ENCODE measurements at regions of chr9 and their contacts with region 1.

Region 1: DNA sequence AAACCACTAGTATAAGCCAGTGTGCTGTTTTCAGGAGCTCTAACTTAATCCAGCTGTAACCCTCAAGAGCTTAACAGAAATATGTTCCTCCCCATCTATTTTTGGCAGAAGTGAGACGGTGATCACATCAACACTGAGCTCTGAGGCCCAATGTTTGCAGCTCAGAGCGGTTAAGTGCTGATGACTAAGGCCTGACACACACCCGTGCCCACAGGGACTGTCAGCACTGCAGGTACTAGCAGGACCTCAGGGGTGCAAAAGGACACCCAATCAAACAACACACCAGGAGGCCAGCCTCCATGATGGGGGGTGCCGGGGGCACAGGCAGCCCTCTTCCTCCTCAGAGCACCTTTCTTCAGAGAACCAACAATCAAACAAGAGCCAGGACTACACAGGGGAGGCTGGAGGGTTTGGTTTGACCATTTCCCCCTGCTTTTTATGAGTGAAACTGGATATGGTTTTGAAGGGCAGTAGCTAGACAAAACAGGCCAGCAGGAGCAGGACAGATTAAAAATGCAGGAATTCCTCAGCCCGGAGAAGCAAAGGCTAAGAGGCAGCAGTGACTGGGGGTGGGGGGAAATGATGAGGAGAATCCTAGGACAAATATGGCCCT is 61.3 kb downstream of the RAPGEF1 start:
- DNase-seq: peak; percentile 89 to 90
- ATAC-seq: peak; percentile 90
- H3K4me3 ChIP-seq: no peak overlapping the region
- H3K27ac ChIP-seq: peak overlapping the region; percentile 86 to 98
- H3K4me1 ChIP-seq: peaks cover 1 to 12% of the 10 kb centered on the region in 2 donors
- H3K27me3 ChIP-seq: no peaks in the 10 kb centered on the region

Region 2: DNA sequence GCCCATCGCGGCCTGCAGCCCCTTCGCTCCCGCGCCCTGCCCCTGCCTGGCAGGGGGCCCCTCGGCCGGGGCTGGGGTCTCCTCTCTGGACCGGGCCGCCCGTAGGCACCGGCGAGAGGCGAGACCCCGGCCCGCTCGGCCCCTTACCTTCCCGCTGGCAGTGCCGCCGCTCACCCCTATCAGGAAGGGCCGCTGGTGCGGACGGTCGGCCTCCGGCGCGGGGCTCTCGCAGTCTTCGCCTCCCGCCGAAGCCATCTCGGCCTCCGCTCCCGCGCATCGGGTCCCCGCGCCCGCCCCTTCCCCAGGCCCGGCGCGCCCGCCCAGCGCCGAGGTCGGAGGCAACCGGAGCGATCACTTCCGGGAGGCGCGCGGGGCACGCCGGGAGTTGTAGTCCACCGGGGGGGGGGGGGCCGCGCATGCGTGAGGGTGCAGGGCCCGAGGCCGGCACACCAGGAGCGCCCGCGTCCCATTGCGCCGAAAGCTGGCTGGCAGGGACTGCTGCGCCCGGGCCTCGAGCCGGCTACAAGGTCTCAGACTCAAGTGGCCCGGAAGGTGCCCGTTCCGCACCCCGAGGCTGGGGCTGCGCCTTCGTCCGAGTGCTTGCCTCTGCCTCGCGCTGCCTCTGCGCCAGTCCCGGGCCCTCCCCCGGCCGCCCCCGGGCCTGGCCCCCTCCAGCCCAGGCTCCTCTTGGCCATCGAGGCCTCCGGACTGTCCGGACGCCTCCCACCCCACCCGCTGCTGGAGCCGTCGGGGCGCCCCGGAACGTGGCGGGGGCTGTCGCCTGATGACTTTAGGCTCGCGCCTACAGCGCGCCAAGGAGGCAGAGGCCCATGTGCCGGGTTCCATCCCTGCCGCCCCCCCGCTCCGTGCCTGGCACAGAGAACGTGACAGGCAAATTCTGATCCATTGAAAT is 147.4 kb before region 1 on chr9 and contains the start of gene UCK1:
- intact Hi-C with region 1: no loop called
- DNase-seq: peak; percentile 88 to 92
- ATAC-seq: peak; percentile 96
- H3K4me3 ChIP-seq: peak within 1 kb of the TSS; percentile 80 to 98
- H3K27ac ChIP-seq: peak within 1 kb of the TSS in 1 of 2 donors; percentile 30
- H3K4me1 ChIP-seq: no peaks in the 10 kb centered on the region
- H3K27me3 ChIP-seq: no peaks in the 10 kb centered on the region
- total RNA-seq, gene UCK1: 24.5 to 28.3 TPM

Region 3: GRCh38 chr9:131608493-131609037 is 70.0 kb before region 1 on chr9:
- intact Hi-C with region 1: loop called in 1 of 2 experiments (anchors 5 kb)
- DNase-seq: peak; percentile 85 to 91
- ATAC-seq: peak; percentile 79
- H3K4me3 ChIP-seq: no peak overlapping the region
- H3K27ac ChIP-seq: peak overlapping the region; percentile 17 to 95
- H3K4me1 ChIP-seq: peaks cover 0 to 2% of the 10 kb centered on the region in 2 donors
- H3K27me3 ChIP-seq: no peaks in the 10 kb centered on the region

Region 4: DNA sequence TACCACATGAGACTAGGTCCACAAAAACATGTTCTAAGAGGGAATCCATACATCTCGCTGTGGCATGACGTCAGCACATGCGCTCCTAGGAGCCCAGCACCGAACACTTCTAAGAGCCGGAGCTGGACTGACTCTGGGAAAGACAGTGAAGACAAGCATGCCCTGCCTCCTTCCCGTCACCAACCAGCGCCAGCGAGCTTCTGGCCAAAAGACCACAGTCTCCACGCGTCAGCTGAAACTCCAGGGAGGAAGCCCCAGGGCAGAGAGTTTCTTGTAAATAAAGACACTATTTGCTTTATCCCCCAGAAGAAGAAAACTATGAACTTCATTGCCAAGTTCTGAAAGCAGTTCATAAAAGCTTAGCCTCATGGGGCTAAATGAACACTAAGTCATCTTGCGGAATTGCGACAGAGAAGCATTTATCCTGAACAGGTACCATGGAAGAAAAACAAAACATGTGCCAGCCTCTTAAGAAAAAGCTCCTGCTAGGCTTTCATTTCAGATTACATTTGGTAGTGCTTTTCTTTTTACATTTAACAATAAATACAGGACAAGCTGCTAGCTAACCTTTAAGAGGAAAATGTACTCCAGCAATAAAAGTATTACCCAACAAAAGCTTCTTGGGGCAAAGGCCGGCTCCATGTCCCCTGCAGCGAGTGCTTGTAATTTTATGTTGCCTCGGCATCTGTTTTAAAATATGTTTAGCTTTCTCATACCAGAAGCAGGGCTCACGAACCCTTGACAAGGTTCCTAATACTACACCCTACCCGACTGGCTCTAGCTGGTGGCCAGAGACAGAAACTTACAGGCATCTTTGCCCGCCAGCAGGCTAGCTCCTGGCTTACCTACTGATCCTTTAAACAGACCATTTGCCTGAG is 36.7 kb before region 1 on chr9:
- intact Hi-C with region 1: loop called in 1 of 2 experiments (anchors 5 kb)
- DNase-seq: peak in 1 of 2 donors; percentile 69
- ATAC-seq: no peak
- H3K4me3 ChIP-seq: no peak overlapping the region
- H3K27ac ChIP-seq: peak overlapping the region in 1 of 2 donors; percentile 29
- H3K4me1 ChIP-seq: peaks cover 0 to 4% of the 10 kb centered on the region in 2 donors
- H3K27me3 ChIP-seq: no peaks in the 10 kb centered on the region

Region 5: GRCh38 chr9:131697097-131697496 is 18.5 kb after region 1 on chr9:
- intact Hi-C with region 1: no loop called
- DNase-seq: no peak
- ATAC-seq: peak; percentile 73
- H3K4me3 ChIP-seq: no peak overlapping the region
- H3K27ac ChIP-seq: no peak overlapping the region
- H3K4me1 ChIP-seq: peaks cover 0 to 6% of the 10 kb centered on the region in 2 donors
- H3K27me3 ChIP-seq: no peaks in the 10 kb centered on the region

Region 6: DNA sequence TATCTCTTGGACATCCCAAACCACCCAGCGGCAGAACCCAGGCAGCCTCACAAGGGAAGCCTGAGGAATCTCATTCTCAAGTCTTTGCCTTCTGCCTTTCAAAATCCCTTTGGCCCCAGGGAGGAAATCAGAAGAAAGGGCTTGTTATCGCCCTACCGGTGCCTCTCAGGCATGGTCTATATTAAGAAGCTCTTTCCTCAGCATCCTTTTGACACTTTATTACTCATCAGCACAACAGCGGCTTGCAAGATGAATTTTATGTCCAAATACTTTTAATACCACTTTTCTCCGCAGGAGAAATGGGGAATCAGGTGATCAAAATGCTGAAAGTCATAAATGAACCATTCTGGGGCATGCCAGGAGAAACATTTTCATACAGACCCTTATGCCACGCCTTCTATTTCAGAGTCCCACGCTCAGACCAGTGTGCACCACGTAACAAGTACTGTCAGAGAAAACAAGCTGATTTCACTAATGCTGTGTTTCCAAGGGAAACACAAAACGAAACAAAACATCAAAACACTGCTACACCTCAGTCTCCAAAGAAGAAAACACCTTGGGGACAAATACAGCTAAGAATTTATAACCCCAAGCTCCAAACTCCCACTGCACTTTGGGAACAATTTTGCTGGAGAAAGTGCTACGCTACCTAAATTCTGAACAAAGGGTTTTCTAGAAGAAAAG is 31.3 kb after region 1 on chr9:
- intact Hi-C with region 1: loop called (anchors 5 kb)
- DNase-seq: no peak
- ATAC-seq: no peak
- H3K4me3 ChIP-seq: no peak overlapping the region
- H3K27ac ChIP-seq: peak overlapping the region in 1 of 2 donors; percentile 7
- H3K4me1 ChIP-seq: peaks cover 4 to 6% of the 10 kb centered on the region in 2 donors
- H3K27me3 ChIP-seq: no peaks in the 10 kb centered on the region

Region 7: GRCh38 chr9:131722009-131722629 is 43.5 kb after region 1 on chr9:
- intact Hi-C with region 1: no loop called
- DNase-seq: peak in 1 of 2 donors; percentile 47
- ATAC-seq: no peak
- H3K4me3 ChIP-seq: no peak overlapping the region
- H3K27ac ChIP-seq: no peak overlapping the region
- H3K4me1 ChIP-seq: no peaks in the 10 kb centered on the region
- H3K27me3 ChIP-seq: no peaks in the 10 kb centered on the region

Region 8: DNA sequence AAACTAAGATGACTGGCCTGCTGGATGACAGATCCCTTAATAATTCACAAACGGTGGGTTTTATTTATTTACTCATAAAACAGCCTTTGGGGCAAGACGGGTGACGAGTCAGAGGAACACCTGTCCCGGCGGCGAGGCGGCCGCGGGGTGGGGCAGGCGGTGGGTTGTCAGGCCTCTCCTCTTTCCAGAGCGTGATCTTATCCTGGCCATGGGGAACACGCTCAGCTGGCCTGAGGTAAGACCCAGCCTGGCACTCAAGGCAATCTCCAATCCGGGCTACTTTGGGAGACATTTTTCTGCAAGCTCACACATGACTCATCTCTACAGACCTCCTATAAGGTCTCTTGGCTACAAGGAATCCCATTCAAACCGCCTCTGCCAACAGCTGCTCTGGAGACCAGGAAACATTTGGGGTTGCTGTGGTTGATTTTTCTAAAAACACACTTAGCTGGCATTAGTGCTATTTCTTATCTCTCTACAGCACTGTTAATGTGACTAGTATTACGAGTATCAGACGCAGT is 55.0 kb after region 1 on chr9:
- intact Hi-C with region 1: loop called (anchors 5 kb)
- DNase-seq: peak in 1 of 2 donors; percentile 74
- ATAC-seq: peak; percentile 83
- H3K4me3 ChIP-seq: no peak overlapping the region
- H3K27ac ChIP-seq: peak overlapping the region in 1 of 2 donors; percentile 65
- H3K4me1 ChIP-seq: peaks cover 5 to 6% of the 10 kb centered on the region in 2 donors
- H3K27me3 ChIP-seq: no peaks in the 10 kb centered on the region

Region 9: GRCh38 chr9:131755541-131756198 is 77.1 kb after region 1 on chr9:
- intact Hi-C with region 1: no loop called
- DNase-seq: peak; percentile 90 to 93
- ATAC-seq: peak; percentile 86
- H3K4me3 ChIP-seq: no peak overlapping the region
- H3K27ac ChIP-seq: no peak overlapping the region
- H3K4me1 ChIP-seq: no peaks in the 10 kb centered on the region
- H3K27me3 ChIP-seq: no peaks in the 10 kb centered on the region

Measured in aorta (tissue), 5 donors.